Breast epithelium (tissue), 4 donors: ENCODE measurements at regions of chr2 and their contacts with region 1.

Region 1: GRCh38 chr2:216949700-216950413 is 90.0 kb upstream of the TNP1 start:
- DNase-seq: no peak
- H3K4me3 ChIP-seq: no peak overlapping the region
- H3K27ac ChIP-seq: no peak overlapping the region
- H3K4me1 ChIP-seq: no peaks in the 10 kb centered on the region
- H3K27me3 ChIP-seq: no peaks in the 10 kb centered on the region
- CTCF ChIP-seq: no peak
- POLR2A ChIP-seq: no peak

Region 2: DNA sequence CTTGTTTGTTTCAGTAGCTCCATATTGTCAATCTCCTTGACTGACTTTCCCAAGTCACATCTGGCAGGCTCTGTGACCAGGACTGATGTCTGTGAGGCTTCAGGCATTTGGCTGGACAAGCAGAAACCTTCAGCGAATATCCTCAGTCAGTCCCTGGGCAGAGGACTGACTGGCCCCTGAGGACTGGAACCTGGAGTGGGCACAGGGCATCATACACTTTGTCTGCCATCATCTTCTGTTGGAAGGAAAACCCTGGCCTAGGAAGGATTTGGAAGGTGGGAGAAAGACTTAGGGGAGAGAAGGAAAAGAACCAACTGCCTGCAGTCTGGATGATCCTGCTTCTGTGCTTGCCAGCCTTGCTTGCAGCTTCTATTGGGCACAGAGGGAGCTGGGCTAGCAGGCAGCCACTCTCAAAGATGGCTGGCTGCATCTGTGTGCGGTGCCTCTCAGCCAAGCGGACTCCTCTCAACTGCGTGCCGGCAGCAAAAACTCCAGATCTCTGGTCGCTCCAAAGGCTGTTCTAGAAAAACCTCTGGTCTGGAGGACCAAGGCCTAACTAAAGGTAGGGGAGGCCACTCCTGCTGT is 704.4 kb before region 1 on chr2:
- intact Hi-C with region 1: loop called (anchors 5 kb)
- DNase-seq: no peak
- H3K4me3 ChIP-seq: no peak overlapping the region
- H3K27ac ChIP-seq: no peak overlapping the region
- H3K4me1 ChIP-seq: no peaks in the 10 kb centered on the region
- H3K27me3 ChIP-seq: no peaks in the 10 kb centered on the region
- CTCF ChIP-seq: no peak
- POLR2A ChIP-seq: no peak

Region 3: GRCh38 chr2:216371756-216372702 is 577.8 kb before region 1 on chr2 and contains the start of gene MARCHF4:
- intact Hi-C with region 1: no loop called
- DNase-seq: peak; percentile 32 to 66
- H3K4me3 ChIP-seq: peak within 1 kb of the TSS in 2 of 3 donors; percentile 33 to 53
- H3K27ac ChIP-seq: no peak within 1 kb of the TSS
- H3K4me1 ChIP-seq: peaks cover 0 to 7% of the 10 kb centered on the region in 2 donors
- H3K27me3 ChIP-seq: peaks cover 8 to 57% of the 10 kb centered on the region in 2 donors
- CTCF ChIP-seq: no peak
- POLR2A ChIP-seq: no peak
- total RNA-seq, gene MARCHF4: not detected

Region 4: DNA sequence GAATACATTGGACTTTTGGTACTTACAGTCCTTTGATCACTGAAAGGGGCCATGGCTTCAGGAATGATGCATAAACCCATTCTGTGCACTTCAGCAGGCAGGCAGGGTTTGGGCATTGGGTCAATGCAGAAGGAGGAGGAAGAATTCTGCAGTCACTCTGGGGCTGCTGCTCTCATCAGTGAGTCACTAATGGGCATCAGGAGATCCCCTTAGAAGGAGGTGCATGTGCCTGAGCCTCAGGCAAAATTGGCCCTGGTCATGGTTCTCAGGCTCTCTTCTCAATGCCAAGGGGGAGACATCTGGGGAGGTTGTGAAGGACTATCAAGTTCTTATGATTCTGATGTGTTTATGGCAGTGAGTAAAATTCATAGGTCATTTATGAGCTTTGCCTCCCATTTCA is 38.0 kb before region 1 on chr2:
- intact Hi-C with region 1: no loop called
- DNase-seq: no peak
- H3K4me3 ChIP-seq: no peak overlapping the region
- H3K27ac ChIP-seq: no peak overlapping the region
- H3K4me1 ChIP-seq: no peaks in the 10 kb centered on the region
- H3K27me3 ChIP-seq: no peaks in the 10 kb centered on the region
- CTCF ChIP-seq: no peak
- POLR2A ChIP-seq: no peak